ENCODE measurements at regions of chr10 and their contacts with region 1.

Region 1: DNA sequence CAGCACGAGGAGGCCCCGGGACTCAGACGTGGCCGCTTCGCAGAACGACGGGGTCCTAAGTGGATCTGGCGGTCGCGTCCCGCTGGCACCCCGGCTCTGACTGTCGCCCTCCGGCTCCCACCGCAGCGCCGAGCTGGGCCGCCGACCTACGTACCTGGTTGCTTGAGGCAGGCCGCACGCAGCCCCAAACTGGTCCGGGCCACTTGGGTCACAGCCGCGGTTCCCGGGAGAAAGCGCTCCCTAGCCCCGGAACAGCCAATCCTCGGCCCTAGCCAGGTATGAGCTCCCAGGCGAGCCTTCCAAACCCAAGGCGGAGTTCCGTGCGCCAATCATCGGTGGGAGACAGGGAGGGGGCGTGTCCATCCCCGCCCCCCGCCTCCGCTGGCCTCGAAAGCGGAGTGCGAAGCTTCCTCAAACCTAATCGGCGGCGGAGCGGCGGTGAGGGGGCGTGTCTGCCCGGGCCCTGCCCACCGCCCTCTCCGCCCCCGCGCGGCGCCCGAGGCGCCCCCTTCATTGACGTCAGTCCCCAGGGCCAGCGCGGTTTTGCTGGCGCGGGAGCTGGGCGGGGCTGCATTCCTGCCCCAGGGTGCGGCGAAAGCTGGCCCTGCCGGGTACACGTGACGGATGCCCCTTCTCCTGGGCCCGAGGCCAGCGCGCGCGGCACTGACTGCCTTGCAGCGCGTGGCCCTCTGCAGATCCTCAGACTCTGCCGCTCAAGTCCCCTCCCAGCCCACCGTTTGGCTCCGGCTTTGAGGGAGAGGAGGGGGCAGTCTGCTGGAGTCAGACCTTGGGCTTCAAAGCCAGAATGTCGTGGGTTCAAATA is at the start of gene AVPI1:
- DNase-seq: peak; percentile 99
- H3K4me3 Mint-ChIP-seq: peak within 1 kb of the TSS; percentile 91
- H3K27ac Mint-ChIP-seq: peak within 1 kb of the TSS; percentile 93
- H3K4me1 Mint-ChIP-seq: peaks cover 23% of the 10 kb centered on the region
- H3K27me3 Mint-ChIP-seq: no peaks in the 10 kb centered on the region
- CTCF ChIP-seq: no peak
- total RNA-seq, gene AVPI1: 276 and 305 TPM in 2 replicates

Region 2: DNA sequence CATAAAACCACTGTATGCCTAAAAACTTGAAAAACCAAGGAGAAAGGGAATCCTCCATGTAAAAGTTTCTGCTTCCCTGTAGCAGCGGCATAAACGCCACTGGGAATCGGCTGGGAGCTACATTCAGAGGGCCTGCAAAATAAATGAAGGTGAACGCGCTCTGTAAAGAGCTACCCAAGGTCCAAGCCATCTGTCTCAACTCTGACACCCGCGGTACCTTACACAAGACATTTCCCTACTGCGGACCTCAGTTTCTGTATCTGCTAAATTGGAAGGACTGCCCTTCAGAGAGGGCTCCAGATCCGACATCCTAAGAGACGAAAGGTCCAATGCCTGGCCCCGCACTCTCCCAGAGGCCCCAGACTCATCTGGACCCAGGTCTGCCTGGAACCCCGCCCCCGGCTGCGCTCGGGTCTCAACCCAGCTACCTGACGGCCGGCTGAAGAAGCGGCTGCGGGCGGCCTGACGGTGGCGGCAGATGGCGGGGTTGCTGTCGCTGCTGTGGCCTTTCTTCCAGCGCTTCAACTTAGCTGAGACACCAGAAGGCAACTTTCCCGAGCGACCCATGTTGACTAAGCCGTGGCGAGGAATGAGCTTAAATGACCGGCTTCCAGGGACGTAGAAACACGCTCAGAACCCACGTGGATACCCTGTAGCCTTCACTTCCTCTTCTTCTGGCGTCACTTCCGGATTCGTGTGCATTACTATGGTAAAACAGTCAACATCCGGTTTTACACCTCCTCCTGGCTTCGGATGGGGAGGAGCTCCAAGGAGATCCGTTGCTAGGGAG is 286.3 kb before region 1 on chr10 and contains the start of gene RRP12:
- CTCF ChIA-PET with region 1: interaction called, 3 read pairs
- POLR2A ChIA-PET with region 1: interaction called, 12 read pairs
- intact Hi-C with region 1: no loop called
- DNase-seq: peak; percentile 98
- H3K4me3 Mint-ChIP-seq: peak within 1 kb of the TSS; percentile 90
- H3K27ac Mint-ChIP-seq: peak within 1 kb of the TSS; percentile 98
- H3K4me1 Mint-ChIP-seq: no peaks in the 10 kb centered on the region
- H3K27me3 Mint-ChIP-seq: no peaks in the 10 kb centered on the region
- CTCF ChIP-seq: no peak
- total RNA-seq, gene RRP12: 66.1 and 86.7 TPM in 2 replicates

Region 3: GRCh38 chr10:97640174-97640867 is 46.9 kb before region 1 on chr10 and contains the start of gene PI4K2A:
- CTCF ChIA-PET with region 1: interaction called, 3 read pairs
- POLR2A ChIA-PET with region 1: interaction called, 57 read pairs
- intact Hi-C with region 1: loop called (anchors 5 kb)
- DNase-seq: peak; percentile 99
- H3K4me3 Mint-ChIP-seq: peak within 1 kb of the TSS; percentile 87
- H3K27ac Mint-ChIP-seq: peak within 1 kb of the TSS; percentile 10
- H3K4me1 Mint-ChIP-seq: peaks cover 15% of the 10 kb centered on the region
- H3K27me3 Mint-ChIP-seq: no peaks in the 10 kb centered on the region
- CTCF ChIP-seq: no peak
- total RNA-seq, gene PI4K2A: 23.5 and 26.6 TPM in 2 replicates

Region 4: GRCh38 chr10:97667463-97667980 is 19.7 kb before region 1 on chr10:
- CTCF ChIA-PET with region 1: interaction called, 11 read pairs
- POLR2A ChIA-PET with region 1: interaction called, 12 read pairs
- intact Hi-C with region 1: no loop called
- DNase-seq: no peak
- H3K4me3 Mint-ChIP-seq: no peak overlapping the region
- H3K27ac Mint-ChIP-seq: no peak overlapping the region
- H3K4me1 Mint-ChIP-seq: no peaks in the 10 kb centered on the region
- H3K27me3 Mint-ChIP-seq: no peaks in the 10 kb centered on the region
- CTCF ChIP-seq: no peak

Region 5: DNA sequence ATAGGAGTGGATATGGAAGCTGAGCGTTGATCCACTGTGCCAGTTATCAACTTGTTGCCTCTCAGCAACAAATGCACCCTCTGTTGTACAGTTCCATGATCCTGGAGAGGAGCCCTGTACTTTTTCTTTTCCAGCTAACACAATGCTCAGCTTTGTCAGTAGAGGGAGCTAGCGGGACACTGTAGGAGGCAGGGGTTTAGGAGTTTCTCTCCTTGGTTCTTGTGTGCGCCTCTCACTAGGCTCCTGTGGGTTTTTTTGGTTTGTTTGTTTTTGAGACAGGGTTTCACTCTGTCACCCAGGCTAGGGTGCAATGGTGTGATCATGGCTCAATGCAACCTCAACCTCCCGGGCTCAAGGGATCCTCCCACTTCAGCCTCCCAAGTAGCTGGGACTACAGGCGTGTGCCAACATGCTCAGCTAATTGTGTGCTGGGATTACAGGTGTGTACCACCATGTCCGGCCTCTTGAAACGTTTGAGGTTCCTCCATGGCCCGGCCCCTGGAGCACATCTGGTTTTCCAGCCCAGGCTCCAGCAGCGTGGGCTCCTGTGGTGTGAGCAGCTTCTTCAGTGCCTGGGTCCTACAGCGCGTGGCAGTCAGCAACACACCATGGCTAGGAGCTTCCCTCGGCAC is 14.4 kb after region 1 on chr10:
- CTCF ChIA-PET with region 1: interaction called, 113 read pairs
- POLR2A ChIA-PET with region 1: interaction called, 915 read pairs
- intact Hi-C with region 1: loop called (anchors 2 kb)
- DNase-seq: peak; percentile 88
- H3K4me3 Mint-ChIP-seq: no peak overlapping the region
- H3K27ac Mint-ChIP-seq: no peak overlapping the region
- H3K4me1 Mint-ChIP-seq: peaks cover 8% of the 10 kb centered on the region
- H3K27me3 Mint-ChIP-seq: no peaks in the 10 kb centered on the region
- CTCF ChIP-seq: peak; percentile 80

Region 6: GRCh38 chr10:97724341-97724941 is 37.3 kb after region 1 on chr10:
- CTCF ChIA-PET with region 1: interaction called, 45 read pairs
- POLR2A ChIA-PET with region 1: interaction called, 915 read pairs
- intact Hi-C with region 1: loop called (anchors 2 kb)
- DNase-seq: peak; percentile 97
- H3K4me3 Mint-ChIP-seq: peak overlapping the region; percentile 19
- H3K27ac Mint-ChIP-seq: peak overlapping the region; percentile 55
- H3K4me1 Mint-ChIP-seq: peaks cover 39% of the 10 kb centered on the region
- H3K27me3 Mint-ChIP-seq: no peaks in the 10 kb centered on the region
- CTCF ChIP-seq: no peak

Region 7: DNA sequence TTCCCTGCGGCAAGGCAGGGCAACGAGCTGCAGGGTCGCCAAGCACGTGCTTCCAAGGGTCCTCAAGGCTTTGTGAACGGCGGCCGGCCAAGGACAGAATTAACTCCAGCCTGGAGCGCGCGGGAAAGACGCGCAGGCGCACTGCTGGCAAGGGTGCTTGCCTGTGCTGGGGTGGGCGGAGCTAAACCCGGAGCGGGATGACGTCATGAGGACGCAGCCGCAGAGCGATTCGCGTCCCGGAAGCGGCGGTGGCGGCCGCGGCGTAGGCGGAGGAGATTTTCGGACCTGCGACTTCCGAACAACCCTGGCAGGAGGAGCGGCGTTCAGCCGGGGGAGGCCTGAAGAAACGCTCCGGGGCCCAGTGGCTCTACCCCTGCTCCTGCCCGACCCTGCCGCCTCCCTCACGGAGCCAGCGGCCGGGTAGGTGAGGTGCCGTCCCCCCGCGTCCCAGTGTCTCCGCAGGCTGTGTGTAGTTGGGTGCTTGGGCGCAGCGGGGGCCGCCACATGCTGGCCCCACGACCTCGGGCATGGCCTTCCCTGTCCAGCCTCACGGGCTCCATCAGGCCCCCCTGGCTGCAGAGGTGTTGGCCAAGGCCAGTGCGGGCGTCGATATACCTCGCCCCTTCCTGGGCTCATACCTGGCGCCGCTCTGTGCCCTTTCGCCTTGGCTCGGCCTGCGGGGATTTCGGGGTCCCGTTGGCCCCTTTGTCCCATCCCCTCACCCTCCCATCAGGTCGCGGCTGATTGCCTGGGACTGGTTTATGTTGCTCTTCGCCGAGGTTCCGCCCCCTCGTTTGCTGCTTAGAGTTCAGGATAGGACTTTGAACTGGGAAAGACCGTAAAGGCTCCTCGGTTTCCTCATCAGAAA is 50.0 kb after region 1 on chr10 and contains the start of gene ZFYVE27:
- CTCF ChIA-PET with region 1: interaction called, 45 read pairs
- POLR2A ChIA-PET with region 1: interaction called, 184 read pairs
- intact Hi-C with region 1: no loop called
- DNase-seq: peak; percentile 93
- H3K4me3 Mint-ChIP-seq: peak within 1 kb of the TSS; percentile 82
- H3K27ac Mint-ChIP-seq: peak within 1 kb of the TSS; percentile 89
- H3K4me1 Mint-ChIP-seq: peaks cover 27% of the 10 kb centered on the region
- H3K27me3 Mint-ChIP-seq: no peaks in the 10 kb centered on the region
- CTCF ChIP-seq: no peak
- total RNA-seq, gene ZFYVE27: 25.7 and 28.7 TPM in 2 replicates

Measured in MCF 10A (cell line).